MCF 10A (cell line): ENCODE measurements at regions of chr21 and their contacts with region 1.

Region 1: DNA sequence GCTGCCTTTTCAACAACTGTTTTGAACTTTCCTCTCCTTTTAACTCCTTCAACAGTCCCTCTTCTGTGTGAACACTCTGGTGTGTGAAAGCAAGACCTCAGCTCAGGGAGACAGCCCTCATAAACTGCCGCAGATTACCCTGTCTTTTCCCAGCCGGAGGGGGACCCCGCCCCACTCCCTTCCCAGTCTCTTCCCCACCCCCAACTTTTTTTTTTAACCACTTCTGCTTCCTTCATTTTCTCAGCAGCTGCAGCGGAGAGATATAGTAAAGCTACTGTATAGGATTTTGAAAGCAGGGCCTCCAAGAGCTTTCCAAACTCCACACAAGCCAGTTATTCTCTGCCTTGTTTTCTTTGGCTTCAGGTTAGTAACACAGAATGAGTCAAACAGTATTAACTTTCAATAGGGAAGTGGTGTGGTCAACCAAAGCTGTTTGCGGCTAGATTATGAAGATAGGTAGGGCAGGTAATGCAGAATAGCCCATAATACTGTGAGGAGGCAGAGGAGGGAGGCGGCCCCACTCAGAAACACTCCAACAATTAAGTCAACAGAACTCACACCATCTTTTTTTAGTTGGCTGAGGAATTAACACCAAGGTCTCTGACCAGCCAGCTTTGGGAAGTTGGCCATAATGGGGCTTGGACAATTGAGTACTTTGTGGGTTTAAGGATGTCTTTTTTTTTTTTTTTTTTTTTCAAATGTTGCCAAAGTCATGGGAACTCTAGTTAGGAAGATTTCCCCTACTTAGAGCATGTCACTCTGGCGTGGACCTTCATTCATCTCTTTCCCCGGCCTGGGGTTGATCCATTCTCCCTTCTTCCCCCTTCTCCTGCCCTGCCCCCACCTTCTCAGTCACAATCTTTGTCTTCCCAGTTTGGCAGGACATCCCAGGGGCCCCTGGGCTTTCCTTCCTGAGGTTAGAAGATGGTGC is 177.0 kb downstream of the CLIC6 start:
- DNase-seq: peak; percentile 94
- H3K4me3 Mint-ChIP-seq: peak overlapping the region; percentile 60
- H3K27ac Mint-ChIP-seq: peak overlapping the region; percentile 92
- H3K4me1 Mint-ChIP-seq: peaks cover 47% of the 10 kb centered on the region
- H3K27me3 Mint-ChIP-seq: no peaks in the 10 kb centered on the region
- CTCF ChIP-seq: no peak

Region 2: DNA sequence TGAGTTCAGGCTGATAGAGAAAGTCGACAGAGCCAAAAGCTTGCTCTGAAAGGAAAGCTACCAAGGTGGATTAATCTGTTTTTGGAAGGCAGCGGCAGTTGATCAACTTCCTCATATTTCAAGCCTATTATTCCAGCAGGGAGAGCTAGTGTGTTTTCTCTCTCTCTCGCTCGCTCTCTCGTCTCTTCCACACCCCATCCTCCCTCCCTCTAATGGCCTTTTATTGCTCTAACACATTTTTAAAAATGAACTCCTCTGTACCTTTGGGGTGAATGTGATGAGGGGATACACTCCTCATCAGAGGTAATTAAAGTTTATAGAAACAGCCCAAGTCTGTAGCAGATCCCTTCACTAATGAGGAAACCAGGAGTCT is 50.6 kb before region 1 on chr21:
- CTCF ChIA-PET with region 1: interaction called, 3 read pairs
- POLR2A ChIA-PET with region 1: interaction called, 304 read pairs
- intact Hi-C with region 1: loop called (anchors 1 kb)
- DNase-seq: peak; percentile 43
- H3K4me3 Mint-ChIP-seq: peak overlapping the region; percentile 49
- H3K27ac Mint-ChIP-seq: peak overlapping the region; percentile 96
- H3K4me1 Mint-ChIP-seq: peaks cover 44% of the 10 kb centered on the region
- H3K27me3 Mint-ChIP-seq: no peaks in the 10 kb centered on the region
- CTCF ChIP-seq: no peak

Region 3: DNA sequence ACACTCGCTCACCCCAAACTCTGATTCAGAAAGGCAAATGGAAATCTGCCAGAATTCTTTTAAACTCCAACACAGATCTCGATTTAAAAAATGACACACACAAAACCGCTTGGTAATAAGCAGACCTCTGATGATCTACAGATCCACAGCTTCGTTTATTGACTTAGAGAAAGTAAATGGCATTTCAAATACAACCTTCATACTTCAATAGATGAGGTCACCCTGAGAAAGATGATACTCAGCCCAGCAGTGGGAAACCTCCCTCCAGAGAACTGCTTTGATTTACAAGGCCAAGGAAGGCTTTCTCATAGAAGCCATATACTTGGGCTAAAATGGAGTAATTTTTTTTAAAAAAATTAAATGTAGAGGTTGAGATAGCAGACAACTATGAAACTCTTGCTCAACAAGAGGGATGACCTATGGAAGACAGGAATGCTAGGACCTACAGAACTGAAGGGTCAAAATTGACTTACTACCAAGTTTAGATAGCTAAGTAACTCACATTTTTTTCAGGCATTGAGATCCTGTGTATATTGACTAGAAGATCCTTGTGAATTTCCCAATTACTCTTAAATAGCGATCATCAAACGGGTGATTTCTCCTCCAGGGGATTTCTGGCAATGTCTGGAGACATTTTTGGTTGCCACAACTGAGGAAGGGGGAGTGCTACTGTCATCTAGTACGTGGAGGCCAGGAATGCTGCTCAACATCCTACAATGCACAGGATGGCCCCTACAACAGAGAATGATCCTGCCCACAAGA is 33.1 kb before region 1 on chr21:
- CTCF ChIA-PET with region 1: interaction called, 3 read pairs
- POLR2A ChIA-PET with region 1: interaction called, 304 read pairs
- intact Hi-C with region 1: loop called (anchors 1 kb)
- DNase-seq: peak; percentile 57
- H3K4me3 Mint-ChIP-seq: peak overlapping the region; percentile 9
- H3K27ac Mint-ChIP-seq: no peak overlapping the region
- H3K4me1 Mint-ChIP-seq: peaks cover 61% of the 10 kb centered on the region
- H3K27me3 Mint-ChIP-seq: no peaks in the 10 kb centered on the region
- CTCF ChIP-seq: no peak

Region 4: GRCh38 chr21:34865928-34866284 is 20.1 kb after region 1 on chr21:
- CTCF ChIA-PET with region 1: interaction called, 4 read pairs
- POLR2A ChIA-PET with region 1: interaction called, 146 read pairs
- intact Hi-C with region 1: no loop called
- DNase-seq: peak; percentile 71
- H3K4me3 Mint-ChIP-seq: peak overlapping the region; percentile 48
- H3K27ac Mint-ChIP-seq: peak overlapping the region; percentile 94
- H3K4me1 Mint-ChIP-seq: peaks cover 74% of the 10 kb centered on the region
- H3K27me3 Mint-ChIP-seq: no peaks in the 10 kb centered on the region
- CTCF ChIP-seq: no peak

Region 5: DNA sequence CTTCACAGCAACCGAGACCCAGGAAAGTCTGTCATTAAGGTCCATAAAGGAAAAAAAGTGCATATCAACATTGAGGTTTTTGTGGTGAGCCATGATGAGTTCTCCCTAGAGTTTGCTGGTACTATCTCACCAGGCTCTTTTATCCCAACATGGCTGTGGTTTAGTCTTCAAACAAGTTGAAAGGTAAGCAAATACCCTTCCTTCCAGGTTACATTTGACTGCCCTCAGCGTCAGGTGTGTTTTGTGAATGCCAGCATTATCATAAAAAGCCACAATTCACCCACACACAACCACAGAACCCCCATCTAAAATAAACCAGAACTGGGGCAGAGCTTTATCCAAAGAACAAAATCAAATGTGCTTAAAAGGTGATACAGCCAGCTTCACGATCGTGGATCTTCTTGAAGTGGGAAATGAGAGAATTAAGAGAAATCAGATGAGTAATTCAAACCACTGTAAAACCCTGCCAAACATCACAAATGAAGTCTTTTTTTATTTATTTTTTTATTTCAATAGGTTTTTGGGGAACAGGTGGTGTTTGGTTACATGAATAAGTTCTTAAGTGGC is 1149.8 kb after region 1 on chr21:
- CTCF ChIA-PET with region 1: no interaction called
- POLR2A ChIA-PET with region 1: no interaction called
- intact Hi-C with region 1: no loop called
- DNase-seq: no peak
- H3K4me3 Mint-ChIP-seq: no peak overlapping the region
- H3K27ac Mint-ChIP-seq: no peak overlapping the region
- H3K4me1 Mint-ChIP-seq: no peaks in the 10 kb centered on the region
- H3K27me3 Mint-ChIP-seq: peaks cover 51% of the 10 kb centered on the region
- CTCF ChIP-seq: no peak